ENCODE measurements at regions of chr2 and their contacts with region 1.

Region 1: GRCh38 chr2:178128836-178129630 is 16.8 kb downstream of the RBM45 start:
- DNase-seq: no peak
- ATAC-seq: no peak

Region 2: GRCh38 chr2:178280244-178280852 is 151.3 kb after region 1 on chr2:
- intact Hi-C with region 1: loop called in 1 of 2 experiments (anchors 5 kb)
- DNase-seq: peak in 1 of 2 donors; percentile 10
- ATAC-seq: no peak